ENCODE measurements at regions of chr17 and their contacts with region 1.

Region 1: DNA sequence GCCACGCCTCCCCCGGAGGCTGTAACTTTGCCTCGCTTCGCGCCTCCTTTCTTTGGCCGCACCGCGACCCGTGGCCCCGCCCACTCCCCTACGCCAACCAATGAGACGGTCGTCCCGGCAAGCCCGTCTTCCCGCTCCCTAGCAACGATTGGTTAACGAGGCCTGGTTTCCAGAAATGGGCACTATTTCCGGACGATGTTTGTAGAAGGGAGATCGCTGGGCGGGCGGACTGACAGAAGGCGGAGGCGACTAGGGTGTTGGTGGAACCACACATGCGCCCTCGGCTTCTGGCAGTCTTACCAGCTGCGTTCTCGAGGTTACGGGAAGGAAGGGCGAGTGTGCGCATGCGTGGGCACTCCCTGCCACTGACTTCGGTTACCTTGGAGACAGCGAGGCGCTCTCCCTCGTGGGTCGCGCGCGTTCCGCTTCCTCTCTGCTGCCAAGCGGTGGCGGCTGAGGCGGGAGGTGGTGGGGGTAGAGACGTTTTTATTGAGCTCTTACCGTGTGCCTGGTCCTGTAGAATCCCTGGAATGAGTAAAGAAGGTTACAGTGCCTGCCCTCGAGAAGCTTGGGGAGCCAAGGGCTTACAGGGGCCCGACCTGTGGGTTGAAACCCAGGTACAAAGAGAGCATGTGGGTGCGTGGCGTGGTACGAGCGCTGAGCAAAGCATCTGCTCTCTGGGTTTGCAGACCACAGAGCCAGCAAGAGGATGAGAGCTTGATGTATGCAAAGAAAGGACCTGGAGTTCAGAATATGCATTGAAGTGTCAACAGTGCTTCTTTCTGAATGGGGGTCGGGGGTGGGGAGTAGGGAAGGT is 500 bp upstream of the MAP3K14 start:
- DNase-seq: peak; percentile 99 to 100
- H3K4me3 ChIP-seq: peak overlapping the region; percentile 68
- H3K27ac ChIP-seq: peak overlapping the region; percentile 95
- H3K4me1 ChIP-seq: peaks cover 81% of the 10 kb centered on the region
- H3K27me3 ChIP-seq: no peaks in the 10 kb centered on the region
- CTCF ChIP-seq: no peak

Region 2: DNA sequence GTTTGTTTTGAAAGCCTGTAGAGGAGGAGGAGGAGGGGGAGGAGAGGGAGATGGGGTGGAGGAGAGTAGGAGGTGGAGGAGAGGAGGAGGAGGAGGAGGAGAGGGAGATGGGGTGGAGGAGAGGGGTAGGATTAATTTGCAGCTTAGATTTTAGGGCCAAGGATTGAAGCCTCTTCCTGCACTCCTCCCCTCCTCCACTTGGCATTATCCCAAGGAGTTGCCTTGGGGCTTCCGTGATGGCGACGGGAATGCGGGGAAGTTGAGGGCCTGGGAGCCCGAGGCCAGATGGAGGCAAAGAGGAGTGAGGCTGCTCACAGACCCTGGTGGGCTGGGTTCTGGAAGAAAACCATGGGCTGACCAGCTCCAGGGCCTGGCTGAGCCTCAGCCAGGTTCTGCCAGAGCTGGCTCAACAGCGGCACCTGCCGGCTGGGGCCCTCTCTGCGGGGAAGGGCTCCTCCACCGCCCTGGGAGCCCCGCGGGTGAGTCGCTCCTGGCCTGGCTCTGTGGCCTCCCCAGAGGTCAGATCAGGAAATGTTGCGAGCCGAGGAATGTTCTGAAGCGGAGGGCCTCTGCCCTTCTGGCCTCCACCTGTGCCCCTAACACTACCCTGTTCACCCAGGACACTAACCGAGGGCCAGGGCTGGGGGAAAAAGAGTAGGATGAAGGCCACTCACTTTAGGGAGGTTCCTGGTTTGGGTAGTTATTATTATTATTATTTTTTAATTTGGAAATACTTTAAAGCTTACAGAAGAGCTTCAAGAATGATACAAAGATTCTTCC is 119.6 kb before region 1 on chr17:
- CTCF ChIA-PET with region 1: interaction called, 15 read pairs
- POLR2A ChIA-PET with region 1: interaction called, 4 read pairs
- intact Hi-C with region 1: no loop called
- DNase-seq: peak; percentile 83 to 97
- H3K4me3 ChIP-seq: no peak overlapping the region
- H3K27ac ChIP-seq: peak overlapping the region; percentile 52
- H3K4me1 ChIP-seq: peaks cover 36% of the 10 kb centered on the region
- H3K27me3 ChIP-seq: no peaks in the 10 kb centered on the region
- CTCF ChIP-seq: peak; percentile 99

Region 3: GRCh38 chr17:45277216-45277849 is 40.0 kb before region 1 on chr17:
- CTCF ChIA-PET with region 1: interaction called, 3 read pairs
- POLR2A ChIA-PET with region 1: interaction called, 6 read pairs
- intact Hi-C with region 1: loop called (anchors 5 kb)
- DNase-seq: peak; percentile 88 to 89
- H3K4me3 ChIP-seq: no peak overlapping the region
- H3K27ac ChIP-seq: peak overlapping the region; percentile 17
- H3K4me1 ChIP-seq: peaks cover 18% of the 10 kb centered on the region
- H3K27me3 ChIP-seq: no peaks in the 10 kb centered on the region
- CTCF ChIP-seq: peak; percentile 95

Region 4: DNA sequence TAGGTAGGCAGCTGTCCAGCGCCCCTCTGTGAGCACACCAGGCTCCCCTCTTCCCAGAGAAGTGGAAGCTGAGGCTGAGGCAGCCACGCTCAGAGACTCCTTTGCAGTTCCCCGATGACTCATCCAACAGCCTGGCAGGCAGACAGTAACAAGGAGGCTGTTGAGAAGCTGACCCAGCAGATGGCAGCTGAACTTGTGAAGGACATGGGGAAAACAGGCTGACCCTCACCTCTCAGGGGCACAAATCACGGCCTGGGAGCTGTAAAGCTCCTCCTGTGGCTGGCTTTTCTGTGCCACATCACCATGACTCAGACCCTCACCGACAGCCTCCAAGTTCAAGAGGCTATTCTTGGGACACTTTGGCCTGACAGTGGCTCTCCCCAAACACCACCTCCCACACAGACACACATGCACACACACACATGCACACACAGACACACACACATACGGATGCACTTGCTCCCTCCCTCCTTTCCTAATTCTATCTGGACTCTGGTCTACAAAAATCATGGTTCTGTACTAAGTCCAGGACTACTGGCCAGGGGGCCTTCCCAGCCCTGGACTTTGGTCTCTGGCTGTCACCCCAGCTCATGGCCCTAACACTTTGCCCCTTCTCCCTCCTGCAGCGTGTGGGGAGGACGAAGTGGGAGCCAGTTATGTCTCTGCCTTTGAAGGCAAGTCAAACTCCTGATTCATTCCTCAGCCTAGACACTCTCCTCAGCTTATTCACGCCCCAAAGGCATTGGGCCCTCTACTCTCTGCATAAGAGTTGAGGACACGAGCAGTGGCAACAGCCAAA is 23.7 kb before region 1 on chr17:
- CTCF ChIA-PET with region 1: interaction called, 4 read pairs
- POLR2A ChIA-PET with region 1: interaction called, 12 read pairs
- intact Hi-C with region 1: loop called (anchors 1 kb)
- DNase-seq: peak; percentile 83 to 96
- H3K4me3 ChIP-seq: no peak overlapping the region
- H3K27ac ChIP-seq: peak overlapping the region; percentile 82
- H3K4me1 ChIP-seq: peaks cover 61% of the 10 kb centered on the region
- H3K27me3 ChIP-seq: no peaks in the 10 kb centered on the region
- CTCF ChIP-seq: no peak; the same call in 1 of the 2 replicates

Region 5: DNA sequence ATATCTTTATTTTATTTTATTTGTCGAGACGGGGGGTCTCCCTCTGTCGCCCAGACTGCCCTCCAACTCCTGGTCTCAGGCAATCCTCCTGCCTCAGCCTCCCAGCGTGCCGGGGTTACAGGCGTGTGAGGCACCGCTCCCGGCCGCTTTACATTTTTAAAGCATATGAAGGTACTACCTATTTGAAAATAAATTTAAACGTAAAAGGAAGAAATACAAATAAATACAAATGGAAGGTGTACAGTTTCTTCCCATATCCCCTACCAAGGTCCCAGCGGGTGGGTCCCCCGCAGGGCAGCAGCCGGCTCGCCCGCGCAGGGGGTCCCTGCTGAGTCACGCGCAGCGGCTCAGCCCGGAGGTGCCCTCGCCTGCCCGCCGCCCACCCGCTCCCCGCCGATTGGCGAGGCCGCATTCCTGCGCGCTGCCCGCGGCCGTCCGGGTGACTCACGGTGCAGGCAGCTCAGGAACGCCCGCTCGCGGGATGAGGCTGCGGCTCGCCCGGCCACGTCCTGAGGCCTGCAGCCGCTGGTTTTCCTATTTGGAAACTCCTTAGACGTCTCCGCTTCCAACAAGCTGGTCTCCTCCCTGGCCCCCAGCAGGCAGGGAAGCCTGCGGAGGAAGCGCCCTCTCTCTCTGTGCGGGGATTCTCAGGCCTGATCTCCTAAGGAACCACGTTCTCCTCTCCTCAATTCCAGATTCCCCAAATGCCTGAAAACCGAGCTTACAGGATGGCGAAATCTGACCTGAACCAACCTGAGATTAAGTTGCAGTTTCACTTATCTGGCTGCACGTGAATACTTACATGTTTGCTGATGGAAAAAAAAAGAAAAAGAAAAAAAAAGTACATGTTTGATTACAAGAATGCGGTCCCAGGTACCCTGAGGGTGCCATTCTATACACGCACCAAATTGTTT is 54.4 kb after region 1 on chr17:
- CTCF ChIA-PET with region 1: interaction called, 5 read pairs
- POLR2A ChIA-PET with region 1: interaction called, 10 read pairs
- intact Hi-C with region 1: loop called (anchors 1 kb)
- DNase-seq: peak; percentile 96 to 97
- H3K4me3 ChIP-seq: peak overlapping the region; percentile 45
- H3K27ac ChIP-seq: peak overlapping the region; percentile 99
- H3K4me1 ChIP-seq: peaks cover 73% of the 10 kb centered on the region
- H3K27me3 ChIP-seq: no peaks in the 10 kb centered on the region
- CTCF ChIP-seq: 0 out of 2 replicates have a peak, but pooled peaks have one; percentile 1

Region 6: DNA sequence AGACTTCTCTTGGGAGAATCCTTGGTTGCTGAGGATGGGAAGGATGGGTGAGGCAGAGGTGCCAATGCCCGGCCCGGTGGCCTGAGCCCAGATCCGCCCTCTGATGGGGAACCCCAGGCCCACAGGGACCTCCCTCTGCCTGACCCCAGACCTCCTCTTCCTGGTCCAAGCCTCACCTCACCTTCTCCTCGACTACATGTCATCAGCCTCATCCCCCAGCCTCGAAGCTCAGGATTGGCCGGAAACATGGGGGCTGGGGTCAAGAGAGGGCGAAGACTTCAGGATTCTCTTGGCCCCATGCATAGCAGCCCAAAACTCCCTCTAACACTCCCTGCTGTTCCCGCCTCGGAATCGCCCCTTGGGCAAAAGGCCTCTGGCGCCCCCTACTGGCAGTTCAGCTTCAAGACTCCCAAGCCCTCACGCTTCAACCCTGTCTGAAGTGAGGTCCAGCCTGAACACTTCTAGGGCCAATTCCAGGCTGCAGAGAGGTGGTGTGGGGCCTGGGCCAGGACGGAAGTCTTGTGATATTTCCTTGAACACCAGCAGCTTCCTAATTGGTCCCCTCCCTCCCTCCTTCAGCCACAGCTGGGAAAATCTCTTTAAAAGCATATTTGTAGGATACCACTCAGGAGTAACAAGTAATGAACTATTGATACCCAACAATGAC is 68.1 kb after region 1 on chr17:
- CTCF ChIA-PET with region 1: interaction called, 3 read pairs
- POLR2A ChIA-PET with region 1: no interaction called
- intact Hi-C with region 1: loop called (anchors 1 kb)
- DNase-seq: peak; percentile 65 to 85
- H3K4me3 ChIP-seq: no peak overlapping the region
- H3K27ac ChIP-seq: no peak overlapping the region
- H3K4me1 ChIP-seq: peaks cover 22% of the 10 kb centered on the region
- H3K27me3 ChIP-seq: no peaks in the 10 kb centered on the region
- CTCF ChIP-seq: peak; percentile 100